ENCODE measurements at regions of chr11 and their contacts with region 1.

Region 1: GRCh38 chr11:4636962-4637661 is at the start of gene OR51D1:
- DNase-seq: peak; percentile 72
- CTCF ChIP-seq: peak; percentile 94

Region 2: GRCh38 chr11:4607781-4608666 is 29.1 kb before region 1 on chr11 and contains the start of gene TRIM68:
- CTCF ChIA-PET with region 1: interaction called, 11 read pairs
- POLR2A ChIA-PET with region 1: no interaction called
- DNase-seq: peak; percentile 96
- CTCF ChIP-seq: no peak

Region 3: DNA sequence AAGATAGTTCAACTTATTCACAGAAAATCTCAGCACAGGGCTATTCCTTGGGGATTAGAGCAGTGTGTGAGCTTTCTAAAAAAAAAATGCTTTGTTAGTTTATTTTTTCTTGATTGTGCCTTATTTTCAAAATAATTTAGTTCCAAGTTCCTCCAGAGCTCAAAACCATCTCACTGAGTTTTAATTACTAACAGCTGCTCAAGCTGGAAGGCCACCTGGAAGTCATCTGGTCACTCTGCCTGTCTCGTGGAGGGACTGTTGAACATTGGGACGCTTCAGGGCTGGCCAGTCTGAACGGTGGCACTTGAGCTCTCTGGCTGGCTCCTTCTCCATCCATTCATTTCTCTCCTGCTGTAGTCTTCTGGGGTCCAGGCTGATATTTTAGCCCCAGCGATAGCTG is 10.7 kb after region 1 on chr11:
- CTCF ChIA-PET with region 1: interaction called, 26 read pairs
- POLR2A ChIA-PET with region 1: no interaction called
- DNase-seq: no peak
- CTCF ChIP-seq: no peak

Region 4: DNA sequence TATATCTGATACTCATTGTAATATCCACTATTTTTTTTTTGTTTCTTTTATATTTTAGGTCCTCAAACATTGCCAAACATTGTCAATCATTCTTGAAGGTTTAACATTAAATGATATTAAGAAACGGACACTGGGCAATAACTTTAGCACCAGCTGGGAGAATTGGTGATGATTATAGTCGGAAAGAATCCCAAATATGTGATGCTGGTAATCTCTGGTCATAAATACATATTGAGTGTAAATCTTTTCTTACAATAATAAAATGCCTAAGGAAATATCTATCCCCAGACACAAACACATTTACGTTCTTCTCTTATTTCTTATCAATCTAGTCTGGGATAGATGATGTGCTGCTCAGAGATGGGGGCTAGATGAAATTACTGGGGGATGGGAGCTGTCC is 35.4 kb after region 1 on chr11:
- CTCF ChIA-PET with region 1: interaction called, 12 read pairs
- POLR2A ChIA-PET with region 1: no interaction called
- DNase-seq: no peak
- CTCF ChIP-seq: no peak

Region 5: DNA sequence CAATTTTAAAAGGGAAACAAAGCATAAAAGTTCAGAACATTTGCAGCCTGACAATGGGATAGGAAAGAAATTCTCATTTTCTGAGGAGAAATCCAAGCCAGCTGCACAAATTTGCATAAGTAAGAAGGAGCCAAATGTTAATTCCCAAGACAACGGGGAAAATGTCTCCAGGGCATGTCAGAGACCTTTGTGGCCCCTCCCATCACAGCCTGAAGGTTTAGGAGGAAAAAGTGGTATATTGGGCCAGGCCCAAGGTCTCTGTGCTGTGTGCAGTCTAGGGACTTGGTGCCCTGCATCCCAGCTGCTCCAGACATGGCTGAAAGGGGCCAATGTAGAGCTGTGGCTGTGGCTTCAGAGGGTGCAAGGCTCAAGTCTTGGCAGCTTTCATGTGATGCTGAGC is 145.4 kb after region 1 on chr11:
- CTCF ChIA-PET with region 1: no interaction called
- POLR2A ChIA-PET with region 1: no interaction called
- DNase-seq: no peak
- CTCF ChIP-seq: no peak

Region 6: DNA sequence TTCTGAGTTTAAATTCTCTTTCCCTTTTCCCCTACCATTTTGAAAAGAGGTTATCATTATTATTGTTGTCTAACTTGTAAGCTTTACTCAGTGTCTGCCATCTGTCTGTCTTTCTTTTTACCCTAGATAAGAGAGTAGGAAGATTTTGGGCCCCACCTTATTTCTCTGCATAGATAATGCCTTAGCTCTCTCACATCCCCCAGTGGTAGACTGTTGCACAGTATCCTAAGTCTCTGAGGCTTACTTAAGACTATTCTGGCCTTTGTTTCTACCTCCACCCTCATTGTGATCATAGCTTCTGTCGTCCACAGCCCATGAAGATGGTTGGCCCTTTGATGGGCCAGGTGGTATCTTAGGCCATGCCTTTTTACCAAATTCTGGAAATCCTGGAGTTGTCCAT is 353.9 kb after region 1 on chr11:
- CTCF ChIA-PET with region 1: interaction called, 11 read pairs
- POLR2A ChIA-PET with region 1: no interaction called
- DNase-seq: no peak
- CTCF ChIP-seq: no peak

Measured in GM10248 (cell line).